Head of caudate nucleus (tissue), 42 donors: ENCODE measurements at regions of chr10 and their contacts with region 1.

Region 1: GRCh38 chr10:23158370-23158769 is 33.7 kb upstream of the PTF1A start:
- DNase-seq: peak in 41 of 42 donors; percentile 9 to 87 (median 65)

Region 2: DNA sequence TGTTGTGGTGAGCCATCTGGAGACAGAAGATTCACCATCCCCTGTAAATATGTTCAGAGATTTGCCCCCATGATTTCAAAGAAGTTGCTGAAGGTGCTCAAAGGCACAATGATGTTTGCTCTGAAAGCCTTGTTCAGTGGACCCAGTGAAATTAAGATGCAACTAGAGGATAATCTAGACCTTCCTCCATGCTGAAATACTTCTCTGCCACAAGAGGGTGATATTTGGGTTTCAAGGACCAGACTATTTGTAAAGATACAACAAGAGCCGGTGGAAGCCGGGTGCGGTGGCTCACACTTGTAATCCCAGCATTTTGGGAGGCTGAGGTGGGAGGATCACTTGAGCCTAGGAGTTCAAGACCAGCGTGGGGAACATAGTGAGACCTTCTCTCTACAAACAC is 76.5 kb before region 1 on chr10:
- intact Hi-C with region 1: no loop called
- DNase-seq: no peak

Region 3: DNA sequence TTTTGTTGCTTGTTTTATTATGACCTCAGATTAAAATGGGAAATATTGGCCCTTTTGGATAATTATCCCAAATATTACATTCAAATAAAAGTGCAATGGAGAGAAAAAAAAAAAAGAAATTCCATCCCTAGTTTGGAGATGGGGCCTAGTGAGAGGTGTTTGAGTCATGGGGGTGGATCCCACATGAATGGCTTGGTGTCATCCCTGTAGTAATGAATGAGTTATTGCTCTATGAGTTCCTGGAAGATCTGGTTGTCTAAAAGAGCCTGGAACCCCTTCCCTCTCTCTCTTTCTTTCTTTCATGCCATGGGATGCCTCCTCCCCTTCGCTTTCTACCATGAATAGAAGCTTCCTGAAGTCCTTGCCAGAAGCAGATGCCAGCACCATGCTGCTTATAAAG is 18.7 kb before region 1 on chr10:
- intact Hi-C with region 1: no loop called
- DNase-seq: no peak

Region 4: GRCh38 chr10:23280420-23281043 is 122.2 kb after region 1 on chr10:
- intact Hi-C with region 1: no loop called
- DNase-seq: no peak

Region 5: DNA sequence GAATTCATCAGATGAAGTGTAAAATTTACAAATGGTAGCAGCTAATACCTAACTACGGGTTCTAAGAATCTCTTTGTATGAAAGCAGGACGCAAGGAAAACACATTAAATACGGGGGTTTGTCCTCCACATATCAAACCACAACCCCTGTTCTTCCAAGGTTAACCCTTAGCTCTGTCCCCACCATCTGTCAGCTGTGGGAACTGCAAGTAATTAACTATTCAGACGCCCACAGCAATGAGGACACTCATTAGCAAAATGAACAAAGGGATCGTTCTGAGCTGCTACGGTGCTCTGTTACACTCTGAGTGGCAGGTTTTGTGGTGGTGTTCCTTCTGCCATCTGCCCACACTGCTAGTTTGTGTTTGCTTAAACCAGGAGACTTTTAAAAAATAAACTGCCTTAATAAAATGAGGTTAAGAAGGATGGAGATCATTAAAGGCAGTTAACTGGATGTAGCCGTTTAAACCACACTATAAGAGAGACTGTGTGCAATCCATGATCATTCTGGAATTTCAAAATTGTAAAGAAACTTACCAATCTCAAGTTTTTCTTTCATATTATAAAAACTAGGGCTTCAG is 134.9 kb after region 1 on chr10:
- intact Hi-C with region 1: loop called (anchors 5 kb)
- DNase-seq: peak in 30 of 42 donors; percentile 6 to 83 (median 42)